Gastrocnemius medialis (tissue), 4 donors: ENCODE measurements at regions of chr5 and their contacts with region 1.

Region 1: DNA sequence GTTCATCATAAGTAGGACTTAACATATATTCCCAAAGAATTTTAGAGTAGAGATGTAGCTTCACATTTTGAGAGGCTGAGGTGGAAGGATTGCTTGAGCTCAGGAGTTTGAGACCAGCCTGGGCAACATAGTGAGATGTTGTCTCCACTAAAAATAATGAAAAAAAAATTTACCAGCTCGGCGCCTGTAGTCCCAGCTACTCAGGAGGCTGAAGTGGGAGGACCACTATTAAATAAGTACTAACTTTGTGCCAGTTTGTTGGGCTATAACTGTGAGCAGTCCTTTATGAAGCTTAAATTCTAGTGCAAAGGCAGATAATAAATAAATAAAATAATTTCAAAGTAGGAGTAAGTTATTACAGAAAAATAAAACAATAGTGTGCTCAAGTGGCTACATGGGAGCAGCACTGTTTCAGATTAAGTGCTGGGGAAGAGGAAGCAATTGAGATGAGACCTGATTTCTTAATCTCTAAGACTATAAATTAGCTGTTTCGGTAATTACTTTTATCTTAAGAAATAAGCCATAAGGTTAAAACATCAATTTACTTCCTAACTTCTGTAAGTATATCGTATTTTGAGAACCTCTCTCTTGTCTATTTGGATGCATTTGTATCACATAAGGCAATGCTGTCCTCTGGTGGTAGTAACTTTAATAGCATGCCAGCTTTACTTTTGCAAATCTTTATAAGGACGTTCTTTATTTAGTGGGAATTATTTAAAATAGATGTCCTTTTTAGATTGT is 98.9 kb downstream of the CSNK1G3 start:
- DNase-seq: no peak
- ATAC-seq: peak in 1 of 2 donors; percentile 69
- H3K4me3 ChIP-seq: no peak overlapping the region
- H3K27ac ChIP-seq: no peak overlapping the region
- H3K4me1 ChIP-seq: no peaks in the 10 kb centered on the region
- H3K27me3 ChIP-seq: no peaks in the 10 kb centered on the region
- CTCF ChIP-seq: peak; percentile 72 to 99 (median 93)
- POLR2A ChIP-seq: no peak

Region 2: DNA sequence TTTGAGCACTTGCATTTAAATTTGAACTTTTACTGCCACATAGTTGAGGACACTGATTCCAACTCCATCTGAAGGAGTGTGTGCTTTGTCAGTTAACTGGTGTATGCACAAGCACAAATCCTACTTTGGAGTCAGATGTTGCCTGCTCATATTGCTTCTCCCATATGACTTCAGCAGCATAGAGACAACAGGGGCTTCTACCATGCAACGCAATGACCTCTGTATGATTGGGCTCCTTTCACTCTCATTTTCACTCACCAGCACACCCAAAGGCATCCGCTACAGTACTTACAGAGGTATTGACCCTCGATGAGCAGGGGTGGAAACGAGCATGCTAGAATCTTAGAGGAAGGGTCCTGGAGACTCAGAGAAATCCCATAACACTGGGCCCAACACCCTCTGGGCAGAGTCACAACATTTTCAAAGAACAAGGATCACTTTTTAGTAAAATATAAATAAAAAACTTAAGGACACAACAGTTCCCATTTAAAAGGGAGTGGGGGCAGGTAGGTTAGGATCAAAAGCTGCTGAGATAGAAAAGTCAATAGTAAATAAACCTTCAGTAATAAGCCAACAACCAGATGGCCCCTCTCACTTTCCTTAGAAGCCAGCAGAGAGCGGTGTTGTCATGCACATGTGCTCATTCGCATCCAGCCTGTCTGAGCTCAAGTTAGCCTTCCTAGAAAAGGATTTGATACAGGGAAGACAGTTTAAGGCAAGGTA is 1095.0 kb before region 1 on chr5:
- in situ Hi-C with region 1: loop called in 2 of 4 experiments (anchors 25 kb)
- intact Hi-C with region 1: no loop called
- DNase-seq: no peak
- ATAC-seq: peak in 1 of 2 donors; percentile 49
- H3K4me3 ChIP-seq: no peak overlapping the region
- H3K27ac ChIP-seq: no peak overlapping the region
- H3K4me1 ChIP-seq: no peaks in the 10 kb centered on the region
- H3K27me3 ChIP-seq: no peaks in the 10 kb centered on the region
- CTCF ChIP-seq: peak in 3 of 5 experiments; percentile 21 to 36 (median 34)
- POLR2A ChIP-seq: no peak

Region 3: DNA sequence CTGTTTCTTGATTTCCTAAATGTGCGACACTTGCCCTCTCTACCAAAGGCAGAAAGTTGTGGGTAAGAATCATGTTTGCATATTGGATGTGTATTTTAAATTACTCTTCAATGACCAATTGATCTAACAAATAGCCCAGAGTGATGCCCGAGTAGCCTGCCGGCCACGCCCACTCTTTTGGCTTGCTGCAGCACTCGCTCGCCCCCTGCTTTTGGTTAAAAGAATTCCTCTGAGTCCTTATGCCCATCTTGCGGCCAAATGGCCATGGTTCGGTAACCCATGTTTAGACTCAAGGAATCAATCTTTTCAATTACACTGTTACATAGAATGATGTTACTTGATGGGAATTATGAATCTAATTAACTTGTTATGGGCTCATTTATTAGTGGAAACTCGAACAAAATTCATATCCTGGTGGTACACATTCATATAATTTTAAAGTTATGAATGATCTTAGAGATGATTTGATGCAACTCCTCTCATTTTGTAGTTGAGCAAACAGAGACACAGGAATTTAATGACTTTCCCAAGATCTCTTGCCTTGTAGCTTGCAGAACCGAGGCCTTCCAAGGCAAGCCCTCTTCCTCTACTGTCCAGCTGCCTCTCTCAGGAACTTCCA is 610.8 kb before region 1 on chr5:
- in situ Hi-C with region 1: loop called in 1 of 4 experiments (anchors 25 kb)
- intact Hi-C with region 1: no loop called
- DNase-seq: no peak
- ATAC-seq: no peak
- H3K4me3 ChIP-seq: no peak overlapping the region
- H3K27ac ChIP-seq: no peak overlapping the region
- H3K4me1 ChIP-seq: no peaks in the 10 kb centered on the region
- H3K27me3 ChIP-seq: no peaks in the 10 kb centered on the region
- CTCF ChIP-seq: no peak
- POLR2A ChIP-seq: no peak

Region 4: GRCh38 chr5:123414975-123415374 is 195.9 kb before region 1 on chr5:
- in situ Hi-C with region 1: loop called in 3 of 4 experiments (anchors 5 to 25 kb)
- intact Hi-C with region 1: no loop called
- DNase-seq: no peak
- ATAC-seq: no peak
- H3K4me3 ChIP-seq: no peak overlapping the region
- H3K27ac ChIP-seq: no peak overlapping the region
- H3K4me1 ChIP-seq: no peaks in the 10 kb centered on the region
- H3K27me3 ChIP-seq: no peaks in the 10 kb centered on the region
- CTCF ChIP-seq: no peak
- POLR2A ChIP-seq: no peak

Region 5: GRCh38 chr5:123423278-123424149 is 187.3 kb before region 1 on chr5 and contains the start of gene CEP120:
- in situ Hi-C with region 1: loop called in 3 of 4 experiments (anchors 5 to 25 kb)
- intact Hi-C with region 1: loop called (anchors 1 kb)
- DNase-seq: peak; percentile 97 to 99
- ATAC-seq: peak; percentile 98 to 99
- H3K4me3 ChIP-seq: peak within 1 kb of the TSS; percentile 81 to 98 (median 89)
- H3K27ac ChIP-seq: peak within 1 kb of the TSS; percentile 86 to 91 (median 87)
- H3K4me1 ChIP-seq: peaks cover 9 to 11% of the 10 kb centered on the region in 2 donors
- H3K27me3 ChIP-seq: no peaks in the 10 kb centered on the region
- CTCF ChIP-seq: peak in 4 of 5 experiments; percentile 52 to 78 (median 70)
- POLR2A ChIP-seq: peak; percentile 48 to 67
- total RNA-seq, gene CEP120: 3.9 to 7.8 (median 7.6) TPM

Region 6: GRCh38 chr5:123636011-123636410 is 25.2 kb after region 1 on chr5:
- in situ Hi-C with region 1: no loop called
- intact Hi-C with region 1: no loop called
- DNase-seq: no peak
- ATAC-seq: no peak
- H3K4me3 ChIP-seq: no peak overlapping the region
- H3K27ac ChIP-seq: no peak overlapping the region
- H3K4me1 ChIP-seq: no peaks in the 10 kb centered on the region
- H3K27me3 ChIP-seq: no peaks in the 10 kb centered on the region
- CTCF ChIP-seq: no peak
- POLR2A ChIP-seq: no peak